Tibial artery (tissue), 4 donors: ENCODE measurements at regions of chr12 and their contacts with region 1.

Region 1: DNA sequence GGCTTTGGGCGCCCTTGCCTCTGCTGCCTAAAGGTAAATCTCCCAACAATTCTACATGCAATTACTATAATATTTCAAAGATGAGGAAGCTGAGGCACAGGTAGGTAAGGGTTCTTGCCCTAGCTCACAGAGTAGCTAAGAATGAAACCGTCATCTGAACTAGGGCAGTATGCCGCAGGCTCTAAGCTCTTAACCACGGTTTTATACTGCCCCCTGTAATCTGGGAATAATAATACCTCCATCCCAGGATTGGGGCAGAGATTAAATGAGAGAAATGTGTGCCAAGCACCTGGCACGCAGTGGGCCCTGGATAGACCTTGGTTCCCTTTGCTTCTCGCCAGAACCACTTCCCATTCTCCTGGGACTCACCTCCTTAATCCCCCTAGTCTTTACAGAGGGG is 1.5 kb upstream of the HRK start:
- DNase-seq: no peak
- H3K4me3 ChIP-seq: no peak overlapping the region
- H3K27ac ChIP-seq: no peak overlapping the region
- H3K4me1 ChIP-seq: peaks cover 5 to 47% (median 36%) of the 10 kb centered on the region in 4 donors
- H3K27me3 ChIP-seq: peaks cover 0 to 73% of the 10 kb centered on the region in 2 donors
- CTCF ChIP-seq: peak; percentile 27

Region 2: GRCh38 chr12:116703214-116703795 is 179.4 kb before region 1 on chr12:
- intact Hi-C with region 1: loop called (anchors 2 kb)
- DNase-seq: peak; percentile 60 to 75
- H3K4me3 ChIP-seq: no peak overlapping the region
- H3K27ac ChIP-seq: no peak overlapping the region
- H3K4me1 ChIP-seq: peaks cover 0 to under 1% (median 0%) of the 10 kb centered on the region in 4 donors
- H3K27me3 ChIP-seq: peaks cover 0 to 2% of the 10 kb centered on the region in 2 donors
- CTCF ChIP-seq: peak; percentile 72 to 89